ENCODE measurements at regions of chr2 and their contacts with region 1.

Region 1: GRCh38 chr2:64859312-64860212 is 129.6 kb upstream of the SLC1A4 start:
- DNase-seq: peak; percentile 85
- H3K4me3 ChIP-seq: peak overlapping the region; percentile 39
- H3K27ac ChIP-seq: peak overlapping the region; percentile 49
- H3K4me1 ChIP-seq: peaks cover 32% of the 10 kb centered on the region
- H3K27me3 ChIP-seq: no peaks in the 10 kb centered on the region
- CTCF ChIP-seq: no peak

Region 2: GRCh38 chr2:64750817-64751285 is 108.7 kb before region 1 on chr2:
- CTCF ChIA-PET with region 1: interaction called, 3 read pairs
- POLR2A ChIA-PET with region 1: no interaction called
- intact Hi-C with region 1: loop called (anchors 5 kb)
- DNase-seq: peak; percentile 100
- H3K4me3 ChIP-seq: peak overlapping the region; percentile 78
- H3K27ac ChIP-seq: peak overlapping the region; percentile 91
- H3K4me1 ChIP-seq: peaks cover 16% of the 10 kb centered on the region
- H3K27me3 ChIP-seq: no peaks in the 10 kb centered on the region
- CTCF ChIP-seq: no peak

Region 3: DNA sequence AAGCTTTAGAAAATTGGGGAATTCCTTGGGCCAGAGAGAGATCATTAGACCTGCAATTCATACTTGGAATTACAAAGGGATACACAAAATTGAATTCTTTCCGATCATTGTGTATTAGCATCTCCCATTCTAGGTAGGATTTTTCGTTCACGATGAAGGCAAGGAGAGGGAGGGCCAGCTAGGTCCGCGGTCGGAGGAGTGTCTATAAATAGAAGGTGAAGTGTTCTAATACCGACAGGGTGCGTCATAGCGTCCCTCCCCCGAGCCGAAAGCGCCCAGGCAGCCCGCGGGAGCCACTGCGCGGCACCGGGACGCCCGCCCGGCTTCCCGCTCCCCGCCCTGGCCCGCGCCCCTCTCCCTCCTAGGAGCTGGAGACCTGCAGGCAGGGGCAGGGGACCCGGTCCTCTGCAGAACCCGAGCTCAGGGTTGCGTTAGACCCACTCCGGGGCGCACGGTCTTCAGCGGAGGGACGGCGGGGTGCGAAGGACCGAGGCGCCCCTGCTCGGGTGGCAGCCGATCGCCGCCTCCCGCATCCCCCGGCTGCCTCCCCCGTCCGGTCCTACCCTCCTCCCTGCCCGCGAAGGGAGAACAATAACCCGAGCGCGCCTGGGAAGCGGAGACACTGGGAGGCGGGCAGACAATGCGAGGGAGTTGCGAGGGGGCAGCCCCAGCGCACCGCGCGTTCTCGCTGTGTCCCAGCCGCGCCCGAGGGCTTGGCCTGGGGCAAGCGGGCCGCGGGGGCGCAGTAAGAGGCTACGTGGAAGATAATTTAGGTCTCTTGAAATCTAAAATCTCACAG is 91.7 kb before region 1 on chr2:
- CTCF ChIA-PET with region 1: no interaction called
- POLR2A ChIA-PET with region 1: no interaction called
- intact Hi-C with region 1: loop called (anchors 5 kb)
- DNase-seq: peak; percentile 79
- H3K4me3 ChIP-seq: peak overlapping the region; percentile 70
- H3K27ac ChIP-seq: peak overlapping the region; percentile 62
- H3K4me1 ChIP-seq: no peaks in the 10 kb centered on the region
- H3K27me3 ChIP-seq: no peaks in the 10 kb centered on the region
- CTCF ChIP-seq: no peak